ENCODE measurements at regions of chr4 and their contacts with region 1.

Region 1: GRCh38 chr4:106369456-106370060 is 980 bp upstream of the GIMD1 start:
- DNase-seq: peak; percentile 85
- H3K4me3 ChIP-seq: no peak overlapping the region
- H3K27ac ChIP-seq: no peak overlapping the region
- H3K4me1 ChIP-seq: peaks cover 19% of the 10 kb centered on the region
- H3K27me3 ChIP-seq: no peaks in the 10 kb centered on the region
- CTCF ChIP-seq: peak; percentile 58 to 60
- POLR2A ChIP-seq: no peak

Region 2: GRCh38 chr4:106329041-106329618 is 40.4 kb before region 1 on chr4:
- CTCF ChIA-PET with region 1: interaction called, 37 read pairs
- POLR2A ChIA-PET with region 1: no interaction called
- dilution Hi-C with region 1: no loop called
- intact Hi-C with region 1: loop called (anchors 2 kb)
- DNase-seq: peak; percentile 69
- H3K4me3 ChIP-seq: no peak overlapping the region
- H3K27ac ChIP-seq: no peak overlapping the region
- H3K4me1 ChIP-seq: peaks cover 9% of the 10 kb centered on the region
- H3K27me3 ChIP-seq: no peaks in the 10 kb centered on the region
- CTCF ChIP-seq: peak; percentile 39 to 64
- POLR2A ChIP-seq: no peak

Region 3: GRCh38 chr4:106502106-106502699 is 132.6 kb after region 1 on chr4:
- CTCF ChIA-PET with region 1: interaction called, 14 read pairs
- POLR2A ChIA-PET with region 1: no interaction called
- dilution Hi-C with region 1: no loop called
- intact Hi-C with region 1: loop called (anchors 1 kb)
- DNase-seq: peak; percentile 66
- H3K4me3 ChIP-seq: no peak overlapping the region
- H3K27ac ChIP-seq: no peak overlapping the region
- H3K4me1 ChIP-seq: no peaks in the 10 kb centered on the region
- H3K27me3 ChIP-seq: no peaks in the 10 kb centered on the region
- CTCF ChIP-seq: peak; percentile 69 to 72
- POLR2A ChIP-seq: no peak

Region 4: GRCh38 chr4:106762666-106763443 is 393.3 kb after region 1 on chr4:
- CTCF ChIA-PET with region 1: no interaction called
- POLR2A ChIA-PET with region 1: no interaction called
- dilution Hi-C with region 1: no loop called
- intact Hi-C with region 1: no loop called
- DNase-seq: no peak
- H3K4me3 ChIP-seq: no peak overlapping the region
- H3K27ac ChIP-seq: no peak overlapping the region
- H3K4me1 ChIP-seq: no peaks in the 10 kb centered on the region
- H3K27me3 ChIP-seq: no peaks in the 10 kb centered on the region
- CTCF ChIP-seq: no peak
- POLR2A ChIP-seq: no peak

Region 5: GRCh38 chr4:106803083-106803482 is 433.5 kb after region 1 on chr4:
- CTCF ChIA-PET with region 1: interaction called, 89 read pairs
- POLR2A ChIA-PET with region 1: no interaction called
- dilution Hi-C with region 1: no loop called
- intact Hi-C with region 1: no loop called
- DNase-seq: peak; percentile 58
- H3K4me3 ChIP-seq: no peak overlapping the region
- H3K27ac ChIP-seq: no peak overlapping the region
- H3K4me1 ChIP-seq: peaks cover 6% of the 10 kb centered on the region
- H3K27me3 ChIP-seq: no peaks in the 10 kb centered on the region
- CTCF ChIP-seq: no peak
- POLR2A ChIP-seq: no peak

Region 6: DNA sequence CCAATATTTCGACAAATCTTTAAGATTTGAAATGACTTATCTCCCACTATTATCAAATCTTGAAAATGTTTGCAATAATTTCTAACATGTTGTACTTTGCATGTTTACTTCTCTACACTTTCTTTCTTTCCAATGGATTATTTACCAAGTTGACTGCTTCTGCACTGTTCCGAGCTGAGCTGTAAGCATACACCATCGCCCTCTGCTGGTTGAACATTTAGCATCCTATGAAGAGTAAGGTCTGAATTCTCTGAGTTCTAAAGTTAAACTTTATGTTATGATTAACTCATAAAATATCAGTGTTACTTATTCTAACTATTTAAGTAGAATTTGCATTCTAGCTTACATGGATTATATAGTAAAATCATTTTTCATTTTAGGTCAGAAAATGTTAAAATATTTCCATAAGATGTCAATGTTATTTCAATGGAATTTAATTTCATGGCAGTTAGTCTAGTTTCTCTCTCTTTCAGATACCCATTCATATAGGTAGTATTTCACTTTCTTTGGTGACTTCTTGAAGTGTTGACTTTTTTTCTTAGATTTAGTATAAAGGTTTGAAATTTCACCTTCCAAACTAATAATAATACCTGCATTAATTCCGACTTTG is 529.2 kb after region 1 on chr4:
- CTCF ChIA-PET with region 1: interaction called, 82 read pairs
- POLR2A ChIA-PET with region 1: no interaction called
- dilution Hi-C with region 1: no loop called
- intact Hi-C with region 1: loop called (anchors 1 kb)
- DNase-seq: peak; percentile 61
- H3K4me3 ChIP-seq: no peak overlapping the region
- H3K27ac ChIP-seq: no peak overlapping the region
- H3K4me1 ChIP-seq: no peaks in the 10 kb centered on the region
- H3K27me3 ChIP-seq: no peaks in the 10 kb centered on the region
- CTCF ChIP-seq: peak; percentile 65 to 69
- POLR2A ChIP-seq: no peak